ENCODE measurements at regions of chr3 and their contacts with region 1.

Region 1: DNA sequence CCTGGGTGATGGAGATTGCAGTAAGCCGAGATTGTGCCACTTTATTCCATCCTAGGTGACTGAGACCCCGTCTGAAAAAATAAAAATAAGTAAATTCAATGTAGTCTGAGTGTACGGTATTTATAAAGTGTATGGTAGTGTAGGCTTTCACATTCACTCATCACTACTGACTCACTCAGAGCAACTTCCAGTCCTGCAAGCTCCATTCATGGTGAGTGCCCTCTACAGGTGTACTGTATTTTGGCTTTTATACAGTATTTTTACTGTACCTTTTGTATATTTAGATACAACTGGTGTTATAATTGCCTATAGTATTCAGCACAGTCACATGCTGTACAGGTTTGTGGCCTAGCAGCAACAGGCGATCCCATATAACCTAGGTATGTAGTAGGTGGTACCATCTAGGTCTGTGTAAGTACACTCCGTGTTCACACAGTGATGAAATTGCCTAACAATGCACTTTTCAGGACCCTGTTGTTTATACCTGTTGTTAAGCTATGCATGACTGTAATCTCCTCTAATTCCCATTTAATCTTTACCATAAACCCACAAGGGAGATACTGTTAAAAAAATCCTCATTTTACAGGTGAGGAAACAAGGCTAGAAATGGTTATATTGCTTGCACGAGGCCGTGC is 19.3 kb downstream of the CACNA1D start:
- DNase-seq: no peak
- H3K4me3 ChIP-seq: no peak overlapping the region
- H3K27ac ChIP-seq: no peak overlapping the region
- H3K4me1 ChIP-seq: peaks cover 0 to 13% of the 10 kb centered on the region in 2 experiments; a peak in 1 of 4 replicates
- H3K27me3 ChIP-seq: peaks cover 7% of the 10 kb centered on the region; the same call in 1 of the 2 replicates
- CTCF ChIP-seq: peak; percentile 36; the same call in 1 of the 2 replicates
- EP300 ChIP-seq: no peak
- RAD21 ChIP-seq: peak; percentile 29; the same call in 1 of the 2 replicates

Region 2: DNA sequence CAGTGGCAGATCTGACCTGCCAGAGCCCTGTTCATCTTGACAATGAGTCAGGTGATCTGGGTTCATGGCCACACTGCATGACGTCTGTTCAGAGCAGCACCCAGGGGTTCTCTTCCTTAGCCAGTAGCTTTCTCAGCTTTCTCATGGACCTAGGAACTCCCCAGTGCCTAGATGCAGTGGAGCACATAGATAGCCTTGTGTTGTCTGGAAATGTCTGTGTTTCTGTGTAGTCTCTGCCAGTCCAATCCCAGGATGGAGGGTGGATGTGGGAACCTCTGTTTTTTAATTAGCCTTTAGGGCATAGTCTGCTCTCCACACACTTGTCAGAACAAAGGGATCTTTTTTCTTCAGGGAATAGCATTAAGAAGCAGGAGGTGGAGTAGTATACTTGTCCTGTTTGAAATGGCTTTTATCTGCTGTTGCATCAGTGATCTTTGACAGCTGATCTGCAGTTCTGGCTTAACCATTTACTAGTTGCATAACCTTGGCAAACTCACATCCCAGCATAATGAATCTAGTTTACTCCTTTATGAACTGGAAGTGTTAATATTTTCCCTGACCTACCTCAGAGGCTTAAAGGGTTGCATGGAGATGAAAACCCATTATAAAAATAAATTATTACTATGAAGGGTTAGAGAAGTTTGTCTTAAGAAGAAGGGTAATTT is 35.4 kb before region 1 on chr3:
- CTCF ChIA-PET with region 1: no interaction called
- POLR2A ChIA-PET with region 1: no interaction called
- DNase-seq: peak; percentile 45
- H3K4me3 ChIP-seq: no peak overlapping the region
- H3K27ac ChIP-seq: peak overlapping the region in 1 of 2 experiments; percentile 74; a peak in 2 of 4 replicates
- H3K4me1 ChIP-seq: peaks cover 0 to 17% of the 10 kb centered on the region in 2 experiments; a peak in 1 of 4 replicates
- H3K27me3 ChIP-seq: no peaks in the 10 kb centered on the region
- CTCF ChIP-seq: no peak
- EP300 ChIP-seq: peak in 1 of 2 experiments; percentile 69; a peak in 2 of 4 replicates
- RAD21 ChIP-seq: 0 out of 2 replicates have a peak, but pooled peaks have one; percentile 3

Region 3: GRCh38 chr3:53493963-53494791 is 19.5 kb before region 1 on chr3 and contains the start of gene CACNA1D:
- CTCF ChIA-PET with region 1: interaction called, 11 read pairs
- POLR2A ChIA-PET with region 1: interaction called, 3 read pairs
- DNase-seq: peak; percentile 89
- H3K4me3 ChIP-seq: peak within 1 kb of the TSS; percentile 35 to 49
- H3K27ac ChIP-seq: no peak within 1 kb of the TSS; a peak in 1 of 4 replicates
- H3K4me1 ChIP-seq: peaks cover 0 to 29% of the 10 kb centered on the region in 2 experiments; a peak in 1 of 4 replicates
- H3K27me3 ChIP-seq: peaks cover 39% of the 10 kb centered on the region
- CTCF ChIP-seq: no peak
- EP300 ChIP-seq: no peak
- RAD21 ChIP-seq: no peak
- polyA plus RNA-seq, gene CACNA1D: 0.05 and 0.12 TPM in 2 replicates

Region 4: GRCh38 chr3:53544357-53544756 is 30.7 kb after region 1 on chr3:
- CTCF ChIA-PET with region 1: no interaction called
- POLR2A ChIA-PET with region 1: no interaction called
- DNase-seq: no peak
- H3K4me3 ChIP-seq: no peak overlapping the region
- H3K27ac ChIP-seq: no peak overlapping the region
- H3K4me1 ChIP-seq: peaks cover 0 to 11% of the 10 kb centered on the region in 2 experiments; a peak in 1 of 4 replicates
- H3K27me3 ChIP-seq: no peaks in the 10 kb centered on the region
- CTCF ChIP-seq: no peak
- EP300 ChIP-seq: no peak
- RAD21 ChIP-seq: no peak

Region 5: GRCh38 chr3:53729618-53730017 is 215.9 kb after region 1 on chr3:
- CTCF ChIA-PET with region 1: no interaction called
- POLR2A ChIA-PET with region 1: no interaction called
- DNase-seq: no peak
- H3K4me3 ChIP-seq: no peak overlapping the region
- H3K27ac ChIP-seq: no peak overlapping the region
- H3K4me1 ChIP-seq: peaks cover 0 to 15% of the 10 kb centered on the region in 2 experiments; a peak in 2 of 4 replicates
- H3K27me3 ChIP-seq: no peaks in the 10 kb centered on the region
- CTCF ChIP-seq: no peak
- EP300 ChIP-seq: no peak
- RAD21 ChIP-seq: no peak